CD4-positive, alpha-beta memory T cell (primary cell): ENCODE measurements at regions of chrX and their contacts with region 1.

Region 1: DNA sequence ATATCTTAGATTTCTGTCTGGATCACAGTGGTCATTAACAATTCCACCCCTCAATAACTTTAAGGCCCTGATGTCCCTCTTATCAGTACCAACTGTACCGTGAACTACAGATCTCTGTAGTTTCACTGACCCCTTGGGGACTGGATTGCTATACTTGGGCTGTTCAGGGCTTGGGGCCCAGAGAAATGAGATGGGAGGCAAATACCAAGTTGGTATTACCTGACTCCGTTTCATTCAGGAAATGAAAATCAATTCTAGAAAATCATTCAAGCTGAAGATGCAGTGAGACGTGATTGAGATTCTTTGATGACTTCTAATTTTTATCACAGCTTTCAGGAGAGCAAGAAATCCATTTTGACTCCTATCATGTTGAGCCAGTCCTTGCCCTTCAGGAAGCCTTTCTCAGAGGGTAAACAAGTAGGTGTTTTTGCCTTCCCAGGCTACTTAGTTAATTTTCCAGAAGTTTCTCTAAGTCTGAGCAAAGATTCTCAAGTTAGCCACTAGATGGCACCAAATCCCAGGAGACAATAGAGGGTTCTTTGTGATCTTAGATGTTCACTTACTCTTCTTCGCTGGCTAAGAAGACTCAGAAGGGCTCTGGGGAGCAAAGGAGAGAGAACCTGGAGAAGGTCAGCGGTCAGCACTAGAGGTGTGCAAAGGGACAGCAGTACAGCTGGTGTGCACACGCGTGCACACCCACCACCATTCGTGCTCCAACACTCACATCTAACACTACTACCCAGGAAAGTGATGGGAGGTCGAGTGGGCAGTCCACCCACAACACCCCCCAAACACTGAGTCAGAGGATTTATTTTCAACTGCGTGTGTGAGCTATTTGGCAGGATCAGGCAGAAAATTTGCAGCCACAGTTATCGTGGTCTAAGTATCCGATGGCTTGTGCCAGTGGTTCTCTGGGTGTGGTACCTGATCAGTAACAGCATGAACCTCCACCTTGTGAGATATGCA is 7.4 kb downstream of the HNRNPH2 start:
- DNase-seq: peak; percentile 50 to 70 (median 69)
- H3K4me3 ChIP-seq: no peak overlapping the region
- H3K4me3 Mint-ChIP-seq: peak overlapping the region; percentile 1 to 80 (median 56)
- H3K27ac ChIP-seq: peak overlapping the region; percentile 42
- H3K27ac Mint-ChIP-seq: peak overlapping the region; percentile 78 to 92 (median 82)
- H3K4me1 ChIP-seq: peaks cover 35% of the 10 kb centered on the region
- H3K4me1 Mint-ChIP-seq: peaks cover 20 to 60% (median 37%) of the 10 kb centered on the region in 4 donors
- H3K27me3 ChIP-seq: no peaks in the 10 kb centered on the region
- H3K27me3 Mint-ChIP-seq: no peaks in the 10 kb centered on the region

Region 2: DNA sequence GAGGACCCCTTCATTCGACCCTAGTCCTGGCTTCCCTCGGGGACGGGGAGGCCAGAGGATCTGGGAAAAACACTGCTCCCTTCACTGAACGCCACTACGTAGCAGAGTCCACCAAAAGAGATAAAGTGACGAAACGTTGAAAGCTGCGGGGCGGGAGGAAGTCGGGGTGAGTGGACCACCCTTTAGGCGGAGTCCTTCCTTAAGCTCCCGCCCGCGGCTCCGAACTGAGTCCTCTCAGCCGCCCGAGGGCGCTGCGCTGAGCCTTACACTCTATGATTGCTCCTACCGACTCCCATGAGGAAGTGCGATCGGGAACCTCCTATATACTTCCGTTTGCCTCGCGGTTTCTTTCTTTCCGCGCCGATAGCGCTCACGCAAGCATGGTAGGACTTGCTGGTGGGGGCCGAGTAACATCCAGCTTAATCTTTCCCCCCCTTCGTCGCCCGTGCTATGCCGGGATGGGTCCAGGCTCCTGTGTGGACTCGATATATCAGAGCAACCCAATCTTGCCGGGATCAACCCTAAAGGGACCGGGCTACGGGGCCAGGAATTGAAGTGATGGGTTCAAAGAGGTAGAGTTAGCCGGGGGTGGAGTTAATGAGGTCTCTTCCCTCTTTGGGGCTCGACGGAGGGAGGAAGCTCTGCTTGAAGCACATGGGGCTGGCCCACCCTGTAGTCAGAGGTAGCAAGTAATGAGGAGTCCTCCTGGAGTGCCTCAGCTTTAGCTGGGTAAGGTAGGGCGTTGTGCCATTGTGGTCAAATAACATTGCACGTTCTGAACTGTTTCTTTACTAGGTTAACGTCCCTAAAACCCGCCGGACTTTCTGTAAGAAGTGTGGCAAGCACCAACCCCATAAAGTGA is 24.6 kb before region 1 on chrX and contains the start of gene RPL36A:
- CTCF ChIA-PET with region 1: interaction called, 21 read pairs
- POLR2A ChIA-PET with region 1: interaction called, 29 read pairs
- intact Hi-C with region 1: no loop called
- DNase-seq: peak; percentile 72 to 84 (median 76)
- H3K4me3 ChIP-seq: peak within 1 kb of the TSS; percentile 47 to 82
- H3K4me3 Mint-ChIP-seq: peak within 1 kb of the TSS; percentile 88 to 98 (median 93)
- H3K27ac ChIP-seq: peak within 1 kb of the TSS; percentile 68
- H3K27ac Mint-ChIP-seq: peak within 1 kb of the TSS; percentile 89 to 98 (median 96)
- H3K4me1 ChIP-seq: peaks cover 15% of the 10 kb centered on the region
- H3K4me1 Mint-ChIP-seq: peaks cover 10 to 39% (median 15%) of the 10 kb centered on the region in 4 donors
- H3K27me3 ChIP-seq: no peaks in the 10 kb centered on the region
- H3K27me3 Mint-ChIP-seq: no peaks in the 10 kb centered on the region
- total RNA-seq, gene RPL36A: 380 to 428 TPM

Region 3: DNA sequence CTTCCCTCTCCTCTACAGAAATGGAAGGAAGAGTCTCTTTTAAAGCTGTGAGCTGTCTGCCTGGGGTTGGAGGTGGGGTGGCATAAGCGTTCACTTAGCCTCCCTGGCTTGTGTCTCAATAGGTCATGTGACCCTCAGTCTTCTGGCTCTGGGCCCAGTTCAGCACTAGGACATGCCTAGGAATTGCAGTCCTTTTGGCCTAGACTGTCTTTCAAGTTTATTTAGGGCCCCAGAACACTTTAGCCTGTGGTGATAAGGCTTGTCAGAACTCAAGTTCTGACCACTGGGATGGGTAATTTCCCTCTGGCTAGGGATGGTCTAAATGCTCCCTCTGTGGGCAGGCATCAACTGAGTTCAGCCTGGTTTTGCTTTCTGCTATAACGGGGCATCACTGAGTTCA is 35.5 kb after region 1 on chrX:
- CTCF ChIA-PET with region 1: no interaction called
- POLR2A ChIA-PET with region 1: no interaction called
- intact Hi-C with region 1: no loop called
- DNase-seq: no peak
- H3K4me3 ChIP-seq: no peak overlapping the region
- H3K4me3 Mint-ChIP-seq: no peak overlapping the region
- H3K27ac ChIP-seq: no peak overlapping the region
- H3K27ac Mint-ChIP-seq: peak overlapping the region in 1 of 7 donors; percentile 52
- H3K4me1 ChIP-seq: no peaks in the 10 kb centered on the region
- H3K4me1 Mint-ChIP-seq: no peaks in the 10 kb centered on the region
- H3K27me3 ChIP-seq: no peaks in the 10 kb centered on the region
- H3K27me3 Mint-ChIP-seq: no peaks in the 10 kb centered on the region

Region 4: GRCh38 chrX:101595739-101596419 is 180.4 kb after region 1 on chrX:
- CTCF ChIA-PET with region 1: interaction called, 6 read pairs
- POLR2A ChIA-PET with region 1: no interaction called
- intact Hi-C with region 1: loop called (anchors 5 kb)
- DNase-seq: peak; percentile 42 to 62 (median 56)
- H3K4me3 ChIP-seq: no peak overlapping the region
- H3K4me3 Mint-ChIP-seq: no peak overlapping the region
- H3K27ac ChIP-seq: no peak overlapping the region
- H3K27ac Mint-ChIP-seq: no peak overlapping the region
- H3K4me1 ChIP-seq: no peaks in the 10 kb centered on the region
- H3K4me1 Mint-ChIP-seq: no peaks in the 10 kb centered on the region
- H3K27me3 ChIP-seq: no peaks in the 10 kb centered on the region
- H3K27me3 Mint-ChIP-seq: peaks cover 0 to 9% of the 10 kb centered on the region in 2 donors

Region 5: GRCh38 chrX:101759000-101759399 is 343.5 kb after region 1 on chrX:
- CTCF ChIA-PET with region 1: interaction called, 35 read pairs
- POLR2A ChIA-PET with region 1: interaction called, 3 read pairs
- intact Hi-C with region 1: loop called (anchors 1 kb)
- DNase-seq: peak; percentile 22 to 44 (median 33)
- H3K4me3 ChIP-seq: no peak overlapping the region
- H3K4me3 Mint-ChIP-seq: no peak overlapping the region
- H3K27ac ChIP-seq: no peak overlapping the region
- H3K27ac Mint-ChIP-seq: no peak overlapping the region
- H3K4me1 ChIP-seq: no peaks in the 10 kb centered on the region
- H3K4me1 Mint-ChIP-seq: peaks cover 0 to 2% (median 0%) of the 10 kb centered on the region in 4 donors
- H3K27me3 ChIP-seq: no peaks in the 10 kb centered on the region
- H3K27me3 Mint-ChIP-seq: peaks cover 2% of the 10 kb centered on the region in 2 donors

Region 6: DNA sequence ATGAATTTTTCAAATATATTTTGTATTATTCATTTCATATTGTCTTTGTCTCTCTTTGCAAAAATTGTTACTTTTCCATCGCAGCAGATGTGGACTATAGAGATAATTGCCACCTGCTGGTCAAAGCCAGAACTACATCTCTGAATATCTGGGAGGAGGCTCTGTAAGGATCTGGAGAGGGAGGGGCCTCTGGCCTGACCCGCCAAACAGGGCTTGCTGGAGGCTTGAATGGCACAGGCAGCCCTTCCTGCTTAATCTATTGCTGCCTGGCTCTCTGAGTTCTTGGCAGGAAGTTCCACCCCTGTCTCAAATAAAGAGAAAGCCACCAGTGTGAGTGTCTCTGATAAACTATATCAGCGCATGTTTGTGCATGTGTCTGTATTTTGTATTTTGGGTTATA is 383.9 kb after region 1 on chrX:
- CTCF ChIA-PET with region 1: interaction called, 6 read pairs
- POLR2A ChIA-PET with region 1: no interaction called
- intact Hi-C with region 1: loop called (anchors 1 kb)
- DNase-seq: peak; percentile 78 to 87 (median 82)
- H3K4me3 ChIP-seq: no peak overlapping the region
- H3K4me3 Mint-ChIP-seq: peak overlapping the region in 5 of 8 donors; percentile 2 to 69 (median 65)
- H3K27ac ChIP-seq: no peak overlapping the region
- H3K27ac Mint-ChIP-seq: peak overlapping the region in 3 of 7 donors; percentile 35 to 54 (median 49)
- H3K4me1 ChIP-seq: no peaks in the 10 kb centered on the region
- H3K4me1 Mint-ChIP-seq: peaks cover 1 to 9% (median 6%) of the 10 kb centered on the region in 4 donors
- H3K27me3 ChIP-seq: no peaks in the 10 kb centered on the region
- H3K27me3 Mint-ChIP-seq: peaks cover 0 to 2% of the 10 kb centered on the region in 2 donors

Region 7: GRCh38 chrX:102155806-102156179 is 740.3 kb after region 1 on chrX and contains the start of gene BEX5:
- CTCF ChIA-PET with region 1: interaction called, 4 read pairs
- POLR2A ChIA-PET with region 1: no interaction called
- intact Hi-C with region 1: loop called (anchors 2 kb)
- DNase-seq: peak; percentile 60 to 83 (median 65)
- H3K4me3 ChIP-seq: peak within 1 kb of the TSS; percentile 57 to 74
- H3K4me3 Mint-ChIP-seq: peak within 1 kb of the TSS; percentile 96 to 100 (median 98)
- H3K27ac ChIP-seq: peak within 1 kb of the TSS; percentile 77
- H3K27ac Mint-ChIP-seq: peak within 1 kb of the TSS; percentile 98 to 100 (median 99)
- H3K4me1 ChIP-seq: peaks cover 8% of the 10 kb centered on the region
- H3K4me1 Mint-ChIP-seq: peaks cover 0 to 14% (median 10%) of the 10 kb centered on the region in 4 donors
- H3K27me3 ChIP-seq: no peaks in the 10 kb centered on the region
- H3K27me3 Mint-ChIP-seq: no peaks in the 10 kb centered on the region
- total RNA-seq, gene BEX5: 5.9 to 7.4 TPM

Region 8: GRCh38 chrX:102659790-102660757 is 1244.6 kb after region 1 on chrX:
- CTCF ChIA-PET with region 1: no interaction called
- POLR2A ChIA-PET with region 1: no interaction called
- intact Hi-C with region 1: loop called (anchors 10 kb)
- DNase-seq: peak; percentile 73 to 86 (median 77)
- H3K4me3 ChIP-seq: peak overlapping the region; percentile 11 to 64
- H3K4me3 Mint-ChIP-seq: peak overlapping the region; percentile 86 to 96 (median 90)
- H3K27ac ChIP-seq: peak overlapping the region; percentile 36
- H3K27ac Mint-ChIP-seq: peak overlapping the region; percentile 74 to 97 (median 95)
- H3K4me1 ChIP-seq: peaks cover 5% of the 10 kb centered on the region
- H3K4me1 Mint-ChIP-seq: peaks cover 14 to 39% (median 22%) of the 10 kb centered on the region in 4 donors
- H3K27me3 ChIP-seq: no peaks in the 10 kb centered on the region
- H3K27me3 Mint-ChIP-seq: no peaks in the 10 kb centered on the region